Mammary epithelial cell (primary cell): ENCODE measurements at regions of chr11 and their contacts with region 1.

Region 1: DNA sequence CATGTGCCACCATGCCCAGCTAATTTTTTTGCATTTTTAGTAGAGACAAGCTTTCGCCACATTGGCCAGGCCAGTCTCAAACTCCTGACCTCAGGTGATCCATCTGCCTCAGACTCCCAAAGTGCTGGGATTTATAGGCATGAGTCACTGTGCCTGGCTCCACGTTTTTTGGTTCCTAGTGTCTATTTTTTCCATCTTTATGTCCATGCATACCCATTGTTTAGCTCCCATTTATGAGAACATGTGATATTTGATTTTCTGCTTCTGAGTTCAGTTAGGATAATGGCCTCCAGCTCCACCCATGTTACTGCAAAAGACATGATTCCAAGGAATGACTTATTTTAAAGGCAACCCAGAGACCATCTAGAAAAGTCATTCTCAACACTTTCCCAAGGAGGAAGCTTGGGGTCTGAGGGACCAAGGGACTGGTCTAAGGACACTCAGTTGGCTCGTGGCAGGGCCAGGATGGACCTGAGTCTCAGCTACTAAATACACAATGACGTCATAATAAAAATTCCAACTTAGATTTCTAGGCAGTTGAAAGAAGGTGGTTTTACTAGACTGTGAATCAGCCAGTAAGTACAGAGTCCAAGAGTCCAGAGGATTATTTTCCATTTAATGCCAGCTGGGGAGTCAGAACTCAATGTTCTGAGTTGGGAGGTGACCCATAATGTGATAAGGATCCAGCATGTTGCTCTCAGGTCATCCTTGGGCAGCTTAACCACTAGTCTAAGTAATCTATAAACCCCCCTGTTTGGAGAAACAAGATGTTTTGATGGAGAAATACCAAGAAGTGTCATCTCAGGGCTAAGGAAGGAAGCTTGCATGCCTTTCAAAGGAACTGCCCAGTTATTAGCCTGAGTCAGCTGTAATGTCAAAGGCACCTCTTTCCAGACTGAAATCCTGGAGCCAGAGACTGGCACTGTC is 39.4 kb downstream of the ABTB2 start:
- DNase-seq: peak; percentile 58
- H3K4me3 ChIP-seq: no peak overlapping the region
- H3K27ac ChIP-seq: no peak overlapping the region
- H3K4me1 ChIP-seq: peaks cover 6% of the 10 kb centered on the region
- H3K27me3 ChIP-seq: no peaks in the 10 kb centered on the region
- CTCF ChIP-seq: no peak

Region 2: GRCh38 chr11:34280945-34281872 is 37.2 kb before region 1 on chr11:
- CTCF ChIA-PET with region 1: no interaction called
- dilution Hi-C with region 1: loop called (anchors 5 kb)
- in situ Hi-C with region 1: no loop called
- intact Hi-C with region 1: no loop called
- DNase-seq: no peak
- H3K4me3 ChIP-seq: no peak overlapping the region
- H3K27ac ChIP-seq: no peak overlapping the region
- H3K4me1 ChIP-seq: no peaks in the 10 kb centered on the region
- H3K27me3 ChIP-seq: no peaks in the 10 kb centered on the region
- CTCF ChIP-seq: no peak

Region 3: GRCh38 chr11:35746356-35747153 is 1428.2 kb after region 1 on chr11:
- CTCF ChIA-PET with region 1: no interaction called
- dilution Hi-C with region 1: no loop called
- in situ Hi-C with region 1: no loop called
- intact Hi-C with region 1: no loop called
- DNase-seq: no peak
- H3K4me3 ChIP-seq: no peak overlapping the region
- H3K27ac ChIP-seq: no peak overlapping the region
- H3K4me1 ChIP-seq: peaks cover 8% of the 10 kb centered on the region
- H3K27me3 ChIP-seq: no peaks in the 10 kb centered on the region
- CTCF ChIP-seq: no peak